ENCODE measurements at regions of chr1 and their contacts with region 1.

Region 1: DNA sequence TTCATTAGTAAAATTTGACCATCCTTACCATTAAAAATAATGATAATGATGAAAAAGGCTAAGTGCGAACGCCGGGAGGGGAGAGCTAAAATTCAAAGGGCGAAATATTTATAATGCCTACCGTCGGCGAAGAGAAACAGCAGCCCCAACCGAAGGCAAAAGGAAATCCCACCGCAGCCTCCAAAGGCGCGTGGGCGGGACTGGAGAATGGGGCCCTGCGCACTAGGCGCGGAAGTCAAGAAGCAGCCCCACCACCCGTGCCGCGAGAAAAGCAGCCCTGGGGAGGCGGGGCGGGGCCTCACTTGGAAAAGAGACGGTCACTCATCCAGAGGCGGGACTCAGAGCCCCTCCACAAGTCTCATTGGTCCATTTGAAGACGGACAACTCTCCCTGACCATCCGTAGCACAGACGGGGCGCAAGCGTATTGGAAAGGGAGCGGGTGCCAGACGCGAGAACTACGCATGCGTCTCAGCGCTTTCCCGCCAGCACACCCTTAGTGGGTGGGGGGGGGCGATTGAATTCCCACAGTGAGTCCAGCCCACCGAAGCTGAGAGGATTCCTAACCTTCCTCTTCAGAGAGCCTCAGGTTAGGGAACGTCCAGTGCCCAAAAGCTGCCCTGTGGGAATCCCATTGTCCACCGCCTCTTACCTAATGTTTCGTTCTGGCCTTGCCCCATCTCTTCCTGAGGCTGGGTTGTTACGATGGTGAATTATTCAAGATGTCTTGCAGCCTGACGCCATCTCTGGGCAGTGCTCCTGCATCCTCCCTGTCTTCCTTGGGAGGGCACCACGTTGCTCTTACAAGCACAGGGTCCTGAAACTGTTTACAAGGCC is 19.0 kb downstream of the MTX1 start:
- DNase-seq: peak; percentile 100
- ATAC-seq: peak; percentile 96
- H3K4me3 ChIP-seq: peak overlapping the region; percentile 51
- H3K27ac ChIP-seq: peak overlapping the region; percentile 86
- H3K4me1 ChIP-seq: peaks cover 30 to 50% of the 10 kb centered on the region in 2 experiments
- H3K27me3 ChIP-seq: no peaks in the 10 kb centered on the region
- CTCF ChIP-seq: peak in 2 of 3 experiments; percentile 2 to 15; a peak in 1 of 6 replicates
- EP300 ChIP-seq: no peak
- POLR2A ChIP-seq: peak; percentile 91
- RAD21 ChIP-seq: no peak

Region 2: GRCh38 chr1:155172732-155173477 is 54.6 kb before region 1 on chr1 and contains the start of gene KRTCAP2:
- CTCF ChIA-PET with region 1: interaction called, 17 read pairs
- POLR2A ChIA-PET with region 1: no interaction called
- in situ Hi-C with region 1: no loop called
- intact Hi-C with region 1: loop called (anchors 1 kb)
- DNase-seq: peak; percentile 96 to 98 (median 98)
- ATAC-seq: peak; percentile 90
- H3K4me3 ChIP-seq: peak within 1 kb of the TSS; percentile 83
- H3K27ac ChIP-seq: peak within 1 kb of the TSS; percentile 89
- H3K4me1 ChIP-seq: peaks cover 14 to 44% of the 10 kb centered on the region in 2 experiments; a peak in 4 of 5 replicates
- H3K27me3 ChIP-seq: no peaks in the 10 kb centered on the region
- CTCF ChIP-seq: peak; percentile 93 to 98 (median 97)
- EP300 ChIP-seq: peak; percentile 42; the same call in 1 of the 2 replicates
- POLR2A ChIP-seq: peak; percentile 93
- RAD21 ChIP-seq: peak in 1 of 2 experiments; percentile 47; a peak in 3 of 4 replicates
- polyA plus RNA-seq, gene KRTCAP2: 429 to 436 TPM

Region 3: GRCh38 chr1:155244368-155245162 is 17.1 kb after region 1 on chr1:
- CTCF ChIA-PET with region 1: interaction called, 3 read pairs
- POLR2A ChIA-PET with region 1: interaction called, 7 read pairs
- in situ Hi-C with region 1: no loop called
- intact Hi-C with region 1: loop called (anchors 1 kb)
- DNase-seq: peak; percentile 92 to 99 (median 94)
- ATAC-seq: peak; percentile 97
- H3K4me3 ChIP-seq: peak overlapping the region; percentile 44
- H3K27ac ChIP-seq: peak overlapping the region; percentile 93
- H3K4me1 ChIP-seq: peaks cover 19 to 25% of the 10 kb centered on the region in 2 experiments
- H3K27me3 ChIP-seq: no peaks in the 10 kb centered on the region
- CTCF ChIP-seq: peak; percentile 40 to 70 (median 59); a peak in 5 of 6 replicates
- EP300 ChIP-seq: peak; percentile 71
- POLR2A ChIP-seq: peak; percentile 94
- RAD21 ChIP-seq: peak; percentile 24 to 37

Region 4: GRCh38 chr1:155308493-155309422 is 81.3 kb after region 1 on chr1 and contains the start of gene FDPS:
- CTCF ChIA-PET with region 1: no interaction called
- POLR2A ChIA-PET with region 1: no interaction called
- in situ Hi-C with region 1: no loop called
- intact Hi-C with region 1: no loop called
- DNase-seq: peak; percentile 97 to 100 (median 98)
- ATAC-seq: peak; percentile 97
- H3K4me3 ChIP-seq: peak within 1 kb of the TSS; percentile 75
- H3K27ac ChIP-seq: peak within 1 kb of the TSS; percentile 93
- H3K4me1 ChIP-seq: peaks cover 23 to 35% of the 10 kb centered on the region in 2 experiments; a peak in 4 of 5 replicates
- H3K27me3 ChIP-seq: no peaks in the 10 kb centered on the region
- CTCF ChIP-seq: 0 out of 6 replicates have a peak, but pooled peaks of 1 of the 3 experiments have one; percentile 1
- EP300 ChIP-seq: no peak
- POLR2A ChIP-seq: peak; percentile 89
- RAD21 ChIP-seq: no peak
- polyA plus RNA-seq, gene FDPS: 864 to 884 TPM

Region 5: GRCh38 chr1:155352631-155353030 is 125.2 kb after region 1 on chr1:
- CTCF ChIA-PET with region 1: no interaction called
- POLR2A ChIA-PET with region 1: no interaction called
- in situ Hi-C with region 1: no loop called
- intact Hi-C with region 1: no loop called
- DNase-seq: no peak
- ATAC-seq: no peak
- H3K4me3 ChIP-seq: no peak overlapping the region
- H3K27ac ChIP-seq: no peak overlapping the region
- H3K4me1 ChIP-seq: peaks cover 0 to 1% of the 10 kb centered on the region in 2 experiments; a peak in 1 of 5 replicates
- H3K27me3 ChIP-seq: no peaks in the 10 kb centered on the region
- CTCF ChIP-seq: no peak
- EP300 ChIP-seq: no peak
- POLR2A ChIP-seq: no peak
- RAD21 ChIP-seq: no peak

Measured in K562 (cell line).